IMR-90 (cell line): ENCODE measurements at regions of chr7 and their contacts with region 1.

Region 1: DNA sequence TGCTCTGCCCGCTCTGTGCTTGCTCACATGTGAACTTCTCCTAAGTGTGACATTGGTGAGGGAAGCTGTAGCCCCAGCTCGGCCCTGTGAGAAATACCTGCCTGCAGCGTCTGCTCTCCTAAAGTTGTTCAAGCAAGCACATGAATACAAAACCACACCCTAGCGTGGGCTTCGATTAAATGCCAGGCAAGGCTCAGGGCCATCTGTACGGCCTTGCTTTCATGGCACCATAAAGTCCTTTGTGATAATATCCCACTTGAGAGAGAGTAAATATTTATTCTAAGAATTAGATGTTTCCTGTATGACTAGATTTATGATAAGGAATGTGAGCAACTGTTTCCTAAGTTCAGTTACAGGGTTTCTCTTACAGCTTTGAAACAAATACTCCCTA is 262.8 kb upstream of the KLF14 start:
- DNase-seq: peak; percentile 61
- ATAC-seq: peak; percentile 75
- H3K4me3 ChIP-seq: no peak overlapping the region
- H3K27ac ChIP-seq: peak overlapping the region; percentile 91
- H3K4me1 ChIP-seq: peaks cover 15% of the 10 kb centered on the region
- H3K27me3 ChIP-seq: no peaks in the 10 kb centered on the region
- CTCF ChIP-seq: no peak
- POLR2A ChIP-seq: no peak
- RAD21 ChIP-seq: no peak

Region 2: GRCh38 chr7:130904031-130904757 is 92.6 kb before region 1 on chr7:
- CTCF ChIA-PET with region 1: no interaction called
- POLR2A ChIA-PET with region 1: interaction called, 10 read pairs
- dilution Hi-C with region 1: no loop called
- in situ Hi-C with region 1: no loop called
- intact Hi-C with region 1: no loop called
- DNase-seq: peak; percentile 93
- ATAC-seq: peak; percentile 11
- H3K4me3 ChIP-seq: peak overlapping the region; percentile 2; the same call in 1 of the 2 replicates
- H3K27ac ChIP-seq: peak overlapping the region; percentile 98
- H3K4me1 ChIP-seq: peaks cover 40% of the 10 kb centered on the region
- H3K27me3 ChIP-seq: no peaks in the 10 kb centered on the region
- CTCF ChIP-seq: no peak
- POLR2A ChIP-seq: peak; percentile 72
- RAD21 ChIP-seq: no peak

Region 3: DNA sequence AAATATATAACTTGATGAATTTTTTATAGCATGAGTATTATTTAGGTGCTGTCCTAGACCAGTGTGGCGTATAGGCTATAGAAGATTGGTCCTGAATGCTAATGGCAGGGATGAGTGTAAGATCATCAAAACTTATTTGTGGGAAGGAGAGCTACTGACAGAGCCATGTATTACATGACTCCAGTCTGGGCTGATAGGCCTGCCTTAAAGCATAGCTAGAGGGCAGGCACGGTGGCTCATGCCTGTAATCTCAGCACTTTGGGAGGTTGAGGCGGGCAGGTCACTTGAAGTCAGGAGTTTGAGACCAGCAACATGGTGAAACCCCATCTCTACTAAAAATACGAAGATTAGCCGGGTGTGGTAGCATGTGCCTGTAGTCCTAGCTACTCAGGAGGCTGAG is 64.7 kb before region 1 on chr7:
- CTCF ChIA-PET with region 1: no interaction called
- POLR2A ChIA-PET with region 1: interaction called, 19 read pairs
- dilution Hi-C with region 1: no loop called
- in situ Hi-C with region 1: no loop called
- intact Hi-C with region 1: no loop called
- DNase-seq: no peak
- ATAC-seq: no peak; the same call in 1 of the 2 replicates
- H3K4me3 ChIP-seq: no peak overlapping the region
- H3K27ac ChIP-seq: no peak overlapping the region
- H3K4me1 ChIP-seq: peaks cover 12% of the 10 kb centered on the region
- H3K27me3 ChIP-seq: no peaks in the 10 kb centered on the region
- CTCF ChIP-seq: no peak
- POLR2A ChIP-seq: no peak
- RAD21 ChIP-seq: no peak

Region 4: DNA sequence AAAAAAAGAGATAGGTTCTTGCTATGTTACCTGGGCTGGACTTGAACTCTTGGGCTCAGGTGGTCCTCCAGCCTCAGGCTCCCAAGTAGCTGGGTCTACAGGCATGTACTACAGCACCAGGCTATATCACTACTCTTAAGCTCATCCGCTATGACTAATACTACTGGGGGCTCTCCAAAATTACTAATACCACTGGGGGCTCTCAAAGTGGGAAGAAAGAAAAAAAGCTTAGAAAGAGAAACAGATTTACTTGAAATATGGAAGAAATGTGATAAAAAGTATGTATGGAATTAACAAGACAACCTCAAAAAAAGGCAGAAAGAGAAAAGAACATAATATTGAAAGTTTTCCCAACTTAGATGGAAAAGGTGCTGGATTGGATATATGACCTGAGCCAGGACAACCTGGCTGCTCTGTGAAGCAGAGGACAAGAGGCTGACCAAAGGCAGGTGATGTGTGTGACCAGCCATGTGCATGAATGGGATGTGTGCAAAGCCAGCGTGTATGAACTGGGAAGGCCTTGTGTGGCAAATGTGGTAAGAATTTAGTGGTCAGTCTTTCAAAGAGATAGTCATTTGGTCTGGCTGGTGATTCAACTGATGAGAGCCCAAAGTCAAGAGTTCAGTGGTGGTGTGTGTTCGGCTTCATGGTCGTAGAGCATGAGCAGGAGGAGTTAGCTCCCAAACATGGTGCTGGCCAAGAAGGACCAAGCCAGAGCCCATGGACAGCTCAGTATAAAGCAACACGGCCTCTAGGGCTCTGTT is 30.4 kb before region 1 on chr7:
- CTCF ChIA-PET with region 1: interaction called, 3 read pairs
- POLR2A ChIA-PET with region 1: no interaction called
- dilution Hi-C with region 1: no loop called
- in situ Hi-C with region 1: no loop called
- intact Hi-C with region 1: loop called (anchors 2 kb)
- DNase-seq: peak; percentile 85
- ATAC-seq: peak; percentile 66
- H3K4me3 ChIP-seq: no peak overlapping the region
- H3K27ac ChIP-seq: peak overlapping the region; percentile 60; the same call in 1 of the 2 replicates
- H3K4me1 ChIP-seq: peaks cover 16% of the 10 kb centered on the region
- H3K27me3 ChIP-seq: no peaks in the 10 kb centered on the region
- CTCF ChIP-seq: no peak
- POLR2A ChIP-seq: no peak
- RAD21 ChIP-seq: no peak

Region 5: GRCh38 chr7:131131746-131132431 is 135.1 kb after region 1 on chr7:
- CTCF ChIA-PET with region 1: no interaction called
- POLR2A ChIA-PET with region 1: no interaction called
- dilution Hi-C with region 1: no loop called
- in situ Hi-C with region 1: no loop called
- intact Hi-C with region 1: no loop called
- DNase-seq: no peak
- ATAC-seq: no peak
- H3K4me3 ChIP-seq: no peak overlapping the region
- H3K27ac ChIP-seq: no peak overlapping the region
- H3K4me1 ChIP-seq: peaks cover 2% of the 10 kb centered on the region; the same call in 1 of the 2 replicates
- H3K27me3 ChIP-seq: no peaks in the 10 kb centered on the region; the same call in 1 of the 2 replicates
- CTCF ChIP-seq: no peak
- POLR2A ChIP-seq: no peak
- RAD21 ChIP-seq: no peak

Region 6: GRCh38 chr7:131279044-131279443 is 282.2 kb after region 1 on chr7:
- CTCF ChIA-PET with region 1: no interaction called
- POLR2A ChIA-PET with region 1: no interaction called
- dilution Hi-C with region 1: no loop called
- in situ Hi-C with region 1: no loop called
- intact Hi-C with region 1: no loop called
- DNase-seq: no peak
- ATAC-seq: no peak
- H3K4me3 ChIP-seq: no peak overlapping the region
- H3K27ac ChIP-seq: no peak overlapping the region
- H3K4me1 ChIP-seq: no peaks in the 10 kb centered on the region
- H3K27me3 ChIP-seq: no peaks in the 10 kb centered on the region
- CTCF ChIP-seq: no peak
- POLR2A ChIP-seq: no peak
- RAD21 ChIP-seq: no peak

Region 7: DNA sequence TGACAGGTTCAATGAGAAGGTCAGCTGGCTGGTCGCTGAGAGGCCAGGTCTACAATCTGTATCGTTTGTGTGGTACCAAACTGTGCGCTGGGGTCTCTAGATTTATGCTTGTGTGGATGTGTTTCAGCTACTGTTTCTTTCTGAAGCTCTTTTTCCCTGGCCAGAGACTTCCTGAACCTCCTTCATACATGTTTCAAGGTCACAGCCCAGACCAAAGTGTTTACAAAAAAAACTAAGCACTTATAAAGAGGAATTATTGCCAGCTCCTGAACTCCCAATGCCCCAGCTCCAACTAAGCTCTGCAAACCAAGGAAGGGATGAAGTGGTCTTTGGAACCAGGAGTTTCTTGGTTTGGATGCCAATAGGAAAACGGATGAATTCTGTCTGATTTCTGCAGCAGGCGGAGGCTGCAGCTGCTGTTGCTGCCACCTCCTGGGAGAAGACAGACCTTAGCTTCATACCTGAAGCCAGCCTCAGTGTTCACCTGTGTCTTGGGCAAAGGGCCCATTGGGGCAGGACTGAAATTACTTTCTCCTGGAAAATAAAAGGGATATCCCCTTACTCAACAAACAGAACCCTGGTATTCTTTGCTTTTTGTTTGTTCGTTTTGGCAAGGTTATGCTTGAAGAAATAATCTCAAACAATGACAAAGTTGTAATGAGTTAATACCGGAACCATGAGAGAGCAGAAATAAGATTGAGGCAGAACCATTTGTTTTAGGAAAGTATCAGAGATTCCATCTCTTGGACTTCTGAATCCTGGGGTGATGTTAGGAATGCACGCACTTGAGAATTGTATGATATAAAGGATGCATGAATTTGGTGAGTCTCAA is 306.3 kb after region 1 on chr7:
- CTCF ChIA-PET with region 1: no interaction called
- POLR2A ChIA-PET with region 1: no interaction called
- dilution Hi-C with region 1: no loop called
- in situ Hi-C with region 1: no loop called
- intact Hi-C with region 1: no loop called
- DNase-seq: peak; percentile 23
- ATAC-seq: no peak
- H3K4me3 ChIP-seq: no peak overlapping the region
- H3K27ac ChIP-seq: no peak overlapping the region
- H3K4me1 ChIP-seq: no peaks in the 10 kb centered on the region
- H3K27me3 ChIP-seq: no peaks in the 10 kb centered on the region
- CTCF ChIP-seq: peak; percentile 38; the same call in 1 of the 2 replicates
- POLR2A ChIP-seq: no peak
- RAD21 ChIP-seq: peak; percentile 66